Heart right ventricle (tissue), 16 donors: ENCODE measurements at regions of chr22 and their contacts with region 1.

Region 1: DNA sequence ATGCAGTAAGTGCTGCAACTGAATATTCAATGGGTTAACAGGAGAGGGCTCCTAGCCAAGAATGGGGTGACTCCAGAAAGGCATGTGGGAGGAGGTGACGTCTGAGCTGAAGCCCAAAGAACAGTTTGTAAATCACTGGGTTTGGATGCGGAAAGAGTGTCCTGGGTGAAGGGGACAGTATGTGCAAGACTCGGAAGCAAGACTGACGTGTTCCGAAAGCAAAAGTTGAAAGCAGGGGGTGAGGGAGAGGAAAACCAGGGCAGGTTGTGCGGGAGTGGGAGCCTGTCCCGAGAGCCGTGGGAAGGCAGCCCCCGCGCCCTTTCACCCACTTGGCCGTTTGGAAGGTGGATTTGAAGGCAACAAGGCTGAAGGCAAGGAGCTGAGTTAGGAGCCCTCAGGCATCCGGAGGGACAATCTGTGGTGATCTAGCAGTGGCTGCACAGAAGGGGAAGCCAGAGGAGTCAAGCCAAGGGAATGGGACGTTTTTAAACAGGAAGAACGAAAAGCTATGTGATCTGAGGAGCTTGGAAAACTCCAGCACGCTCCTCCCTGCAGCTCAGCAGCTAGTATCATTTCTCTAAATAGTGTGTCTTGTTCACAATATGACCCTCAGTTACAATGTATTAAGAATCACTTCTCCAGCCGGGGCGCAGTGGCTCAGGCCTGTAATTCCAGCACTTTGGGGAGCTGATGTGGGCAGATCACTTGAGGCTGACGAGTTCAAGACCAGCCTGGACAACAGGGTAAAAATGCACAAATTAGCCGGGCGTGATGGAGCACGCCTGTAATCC is 7.7 kb downstream of the SLC25A18 start:
- DNase-seq: peak; percentile 78 to 87
- ATAC-seq: peak; percentile 84 to 96 (median 94)
- H3K4me3 ChIP-seq: peak overlapping the region in 9 of 10 donors; percentile 3 to 51 (median 41)
- H3K27ac ChIP-seq: peak overlapping the region; percentile 81 to 94 (median 86)
- H3K4me1 ChIP-seq: peaks cover 11 to 35% (median 27%) of the 10 kb centered on the region in 9 donors
- H3K27me3 ChIP-seq: no peaks in the 10 kb centered on the region
- CTCF ChIP-seq: no peak

Region 2: DNA sequence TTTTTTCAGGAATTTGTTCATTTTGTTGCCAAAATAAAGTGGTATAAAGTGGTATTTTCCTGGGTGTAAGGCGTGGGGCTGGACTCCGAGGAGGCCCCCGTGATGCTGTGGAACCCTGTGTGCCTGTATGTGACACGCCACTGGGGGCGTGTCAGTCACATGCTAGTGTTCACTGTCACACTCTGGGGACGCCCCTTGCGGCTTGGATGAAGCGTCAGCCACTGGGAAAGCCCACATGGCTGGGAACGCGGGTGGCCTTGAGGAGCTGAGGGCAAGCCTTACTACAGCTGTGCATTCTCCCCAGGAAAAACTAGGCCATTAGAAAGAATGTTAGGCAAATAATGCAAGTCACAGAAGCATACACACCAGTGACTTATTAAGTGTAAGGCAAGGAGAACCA is 84.7 kb before region 1 on chr22:
- intact Hi-C with region 1: no loop called
- DNase-seq: no peak
- ATAC-seq: no peak
- H3K4me3 ChIP-seq: no peak overlapping the region
- H3K27ac ChIP-seq: no peak overlapping the region
- H3K4me1 ChIP-seq: peaks cover 0 to 13% (median 0%) of the 10 kb centered on the region in 9 donors
- H3K27me3 ChIP-seq: no peaks in the 10 kb centered on the region
- CTCF ChIP-seq: no peak

Region 3: GRCh38 chr22:17628304-17629166 is 57.5 kb after region 1 on chr22 and contains the start of gene ATP6V1E1:
- intact Hi-C with region 1: loop called in 2 of 10 experiments (anchors 5 kb)
- DNase-seq: peak; percentile 95 to 98
- ATAC-seq: peak; percentile 99 to 100 (median 100)
- H3K4me3 ChIP-seq: peak within 1 kb of the TSS; percentile 65 to 99 (median 90)
- H3K27ac ChIP-seq: peak within 1 kb of the TSS; percentile 76 to 96 (median 91)
- H3K4me1 ChIP-seq: peaks cover 5 to 43% (median 25%) of the 10 kb centered on the region in 9 donors
- H3K27me3 ChIP-seq: no peaks in the 10 kb centered on the region
- CTCF ChIP-seq: no peak
- total RNA-seq, gene ATP6V1E1: 179 to 237 (median 218) TPM